ENCODE measurements at regions of chr21 and their contacts with region 1.

Region 1: DNA sequence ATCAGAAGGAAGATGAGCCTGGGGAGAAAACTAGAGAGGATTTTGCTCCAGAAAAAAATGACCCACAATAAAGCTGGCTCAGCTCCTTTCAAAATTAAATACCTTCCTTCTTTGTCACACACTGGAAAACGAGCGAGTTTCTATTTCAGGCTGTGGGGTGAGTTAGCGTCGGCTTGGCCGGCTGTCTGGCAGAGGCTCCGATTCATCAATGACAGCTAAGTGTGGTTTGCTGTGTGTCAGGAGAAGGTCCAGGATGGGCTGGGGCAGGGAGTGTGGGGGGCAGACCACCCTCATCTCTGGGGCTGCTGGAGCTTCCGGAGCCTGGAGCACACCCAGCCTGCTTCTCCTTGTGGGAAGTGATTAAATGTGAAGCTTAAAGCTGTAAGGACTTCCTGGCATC is 120.2 kb downstream of the ETS2 start:
- DNase-seq: peak; percentile 89
- ATAC-seq: peak; percentile 87
- H3K4me3 ChIP-seq: no peak overlapping the region
- H3K27ac ChIP-seq: peak overlapping the region; percentile 61 to 98
- H3K4me1 ChIP-seq: no peaks in the 10 kb centered on the region
- H3K27me3 ChIP-seq: no peaks in the 10 kb centered on the region

Region 2: GRCh38 chr21:38989745-38990423 is 64.0 kb after region 1 on chr21:
- intact Hi-C with region 1: loop called in 1 of 2 experiments (anchors 5 kb)
- DNase-seq: no peak
- ATAC-seq: no peak
- H3K4me3 ChIP-seq: no peak overlapping the region
- H3K27ac ChIP-seq: no peak overlapping the region
- H3K4me1 ChIP-seq: peaks cover 2 to 4% of the 10 kb centered on the region in 2 donors
- H3K27me3 ChIP-seq: no peaks in the 10 kb centered on the region

Region 3: GRCh38 chr21:39004634-39005501 is 78.9 kb after region 1 on chr21:
- intact Hi-C with region 1: loop called in 1 of 2 experiments (anchors 5 kb)
- DNase-seq: peak in 1 of 2 donors; percentile 90
- ATAC-seq: peak; percentile 60
- H3K4me3 ChIP-seq: no peak overlapping the region
- H3K27ac ChIP-seq: peak overlapping the region; percentile 61 to 92
- H3K4me1 ChIP-seq: peaks cover 0 to 11% of the 10 kb centered on the region in 2 donors
- H3K27me3 ChIP-seq: no peaks in the 10 kb centered on the region

Region 4: DNA sequence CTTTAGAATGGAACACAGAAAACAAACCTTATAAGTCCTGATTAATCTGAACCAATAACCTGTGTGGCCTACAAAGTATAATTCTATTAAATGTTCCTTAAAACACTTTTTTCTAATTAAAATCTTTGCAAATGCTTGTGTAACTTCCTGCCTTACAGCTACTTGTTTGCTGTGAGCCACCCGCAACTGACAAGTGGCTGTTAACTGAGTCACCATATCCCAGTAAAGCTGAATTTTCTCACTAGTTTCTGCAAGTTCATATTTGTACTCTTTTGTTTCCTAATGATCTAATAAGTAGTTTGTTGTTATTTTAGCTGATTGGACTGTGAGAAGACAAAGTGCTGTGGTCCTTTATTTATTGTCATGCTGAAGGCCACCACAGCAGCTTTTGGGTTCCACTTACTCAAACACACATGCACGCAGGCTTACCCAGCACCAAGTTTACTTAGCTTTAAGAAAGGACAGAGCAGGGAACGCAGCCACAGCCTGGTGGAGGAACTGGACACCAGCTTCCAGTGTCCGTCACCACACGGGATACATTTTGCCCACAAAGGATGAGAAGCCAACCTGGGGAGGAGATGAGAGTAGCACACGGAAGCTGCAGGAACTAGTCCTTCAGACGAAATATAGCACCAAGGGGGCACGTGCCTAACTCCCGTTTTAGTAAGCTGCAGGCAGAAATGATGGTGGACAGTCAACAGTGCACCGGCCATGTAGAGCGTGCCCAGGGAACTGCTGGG is 471.9 kb after region 1 on chr21:
- intact Hi-C with region 1: no loop called
- DNase-seq: no peak
- ATAC-seq: no peak
- H3K4me3 ChIP-seq: no peak overlapping the region
- H3K27ac ChIP-seq: no peak overlapping the region
- H3K4me1 ChIP-seq: no peaks in the 10 kb centered on the region
- H3K27me3 ChIP-seq: no peaks in the 10 kb centered on the region